Posterior cingulate gyrus (tissue), 11 donors: ENCODE measurements at regions of chr9 and their contacts with region 1.

Region 1: DNA sequence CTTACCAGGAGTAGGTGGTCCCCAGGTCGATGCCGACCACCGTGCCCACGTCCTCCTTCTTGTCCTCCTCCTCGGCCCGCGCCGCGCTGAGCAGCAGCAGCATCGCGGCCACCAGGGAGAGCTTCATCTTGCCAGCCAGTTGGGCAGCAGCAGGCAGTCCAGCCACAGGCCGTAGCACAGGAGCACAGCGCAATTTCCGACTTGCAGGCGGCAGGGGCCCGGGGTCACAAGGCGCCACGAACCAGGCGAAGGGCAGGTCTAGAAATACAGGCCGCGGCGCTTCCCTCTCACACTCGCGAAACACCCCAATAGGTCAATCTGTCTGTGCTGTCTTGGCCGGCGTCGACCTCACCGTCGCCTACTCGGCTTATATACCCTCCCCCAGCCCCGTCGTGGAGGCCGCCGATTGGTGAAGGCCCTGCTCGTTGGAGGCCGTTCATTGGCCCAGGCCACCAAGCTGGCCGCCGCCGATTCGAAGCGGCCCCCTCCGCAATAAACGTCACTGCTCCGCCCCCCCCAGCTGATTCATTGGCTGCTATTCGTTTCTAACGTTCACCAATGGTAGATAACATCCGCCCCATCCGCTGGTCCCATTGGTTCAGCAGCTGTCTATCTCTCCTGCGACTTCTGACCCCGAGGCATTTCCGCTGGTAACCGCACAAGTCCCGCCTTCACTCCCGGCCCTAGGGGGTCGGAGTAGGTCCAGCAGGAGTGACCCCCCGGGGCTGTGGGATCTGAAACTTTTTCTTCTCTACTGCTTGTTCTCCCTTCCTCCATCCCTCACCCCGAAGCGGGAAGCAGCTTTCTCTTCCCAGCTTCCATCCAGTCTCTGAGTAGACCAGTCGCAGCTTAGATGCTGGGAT is at the start of gene HSPA5:
- DNase-seq: peak; percentile 98 to 100 (median 99)

Region 2: GRCh38 chr9:124934290-124934689 is 306.9 kb before region 1 on chr9:
- intact Hi-C with region 1: no loop called
- DNase-seq: no peak

Region 3: GRCh38 chr9:125189361-125190289 is 51.6 kb before region 1 on chr9 and contains the start of gene PPP6C:
- intact Hi-C with region 1: loop called (anchors 1 kb)
- DNase-seq: peak; percentile 97 to 100 (median 98)

Region 4: GRCh38 chr9:125200210-125201047 is 40.8 kb before region 1 on chr9 and contains the start of gene RABEPK:
- intact Hi-C with region 1: loop called (anchors 2 kb)
- DNase-seq: peak; percentile 79 to 98 (median 90)

Region 5: DNA sequence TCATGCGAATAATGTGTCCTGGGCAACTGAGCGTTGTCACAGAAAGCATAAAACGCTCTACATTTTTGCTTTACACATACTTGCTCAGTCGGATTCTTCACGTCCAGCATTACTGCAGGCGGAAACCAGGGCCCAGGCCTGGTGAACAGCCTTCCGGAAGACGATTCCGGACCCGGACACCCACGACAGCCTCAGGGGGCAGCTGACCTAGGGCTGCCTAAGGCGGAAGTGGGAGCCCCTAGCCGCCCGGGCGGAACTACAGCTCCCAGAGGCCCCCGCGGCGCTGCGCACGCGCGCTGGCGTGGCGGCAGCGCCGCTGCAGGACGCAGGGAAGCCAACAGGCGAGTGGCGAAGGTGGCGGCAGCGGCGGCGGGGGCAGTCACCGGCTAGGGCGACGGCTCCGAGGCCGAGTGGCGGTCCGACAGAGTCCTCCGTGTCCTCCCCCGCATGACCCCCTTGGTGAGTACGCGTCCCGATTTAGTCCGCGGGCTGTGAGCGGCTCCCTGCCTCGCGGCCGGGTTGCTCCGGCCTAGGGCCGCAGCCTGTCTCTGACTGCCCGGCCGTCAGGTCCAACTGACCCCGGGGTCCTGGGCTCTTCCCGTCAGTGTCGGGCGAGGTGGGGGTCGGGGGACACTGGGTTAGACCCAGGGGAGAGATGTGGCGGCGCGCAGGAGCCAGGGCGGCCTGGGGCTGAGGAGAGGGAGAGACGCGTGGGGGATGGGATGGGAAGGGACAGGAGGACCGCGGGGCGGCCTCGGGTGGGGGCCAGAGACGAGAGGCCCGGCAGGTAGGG is 20.5 kb after region 1 on chr9 and contains the start of gene GAPVD1:
- intact Hi-C with region 1: loop called (anchors 2 kb)
- DNase-seq: peak; percentile 76 to 98 (median 85)